ENCODE measurements at regions of chr2 and their contacts with region 1.

Region 1: DNA sequence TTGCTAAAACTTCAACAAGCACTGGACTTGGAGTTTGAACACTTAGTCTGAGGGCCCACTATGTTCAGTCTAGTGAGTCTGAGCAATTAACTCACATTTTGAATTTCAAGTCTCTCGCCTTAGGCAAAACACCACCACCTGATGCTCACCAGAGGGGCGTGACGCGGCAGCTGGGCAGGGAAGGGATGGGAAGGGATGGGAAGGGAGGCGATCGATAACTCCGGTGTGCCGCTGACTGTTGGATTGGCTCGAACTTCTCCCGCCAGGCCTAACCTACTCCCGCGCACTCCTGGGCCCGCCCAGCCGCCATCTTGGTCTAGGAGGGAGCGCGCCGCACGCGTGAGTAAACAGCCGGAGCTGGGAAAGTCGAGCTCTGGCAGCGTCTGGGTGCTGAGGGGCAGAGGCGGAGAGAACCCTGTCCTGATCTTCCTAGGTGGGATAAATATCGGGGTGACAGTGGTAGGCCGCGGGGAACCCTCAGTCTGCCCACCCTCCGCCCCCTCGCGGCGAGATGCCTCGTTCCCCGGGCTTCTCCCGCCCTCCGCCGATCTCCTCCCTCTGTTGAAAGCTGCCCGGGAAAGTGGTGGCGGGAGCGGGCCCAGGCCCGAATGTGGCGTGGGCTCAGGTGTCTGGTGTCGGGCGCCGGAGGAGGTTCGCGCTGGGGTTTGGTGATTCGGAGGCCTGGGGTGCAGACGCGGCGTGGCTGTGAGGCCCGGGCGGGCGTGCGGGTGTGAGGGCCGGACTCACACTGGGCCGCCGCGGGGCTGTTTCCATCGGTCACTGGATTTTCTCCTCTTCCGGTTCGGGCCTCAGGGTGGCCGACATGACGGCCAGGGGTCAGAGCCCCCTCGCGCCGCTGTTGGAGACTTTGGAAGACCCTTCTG is at the start of gene RIF1:
- DNase-seq: peak; percentile 56 to 86 (median 70)
- ATAC-seq: peak; percentile 88
- H3K4me3 ChIP-seq: peak within 1 kb of the TSS; percentile 96
- H3K4me3 Mint-ChIP-seq: peak within 1 kb of the TSS; percentile 95
- H3K27ac ChIP-seq: peak within 1 kb of the TSS; percentile 90 to 91
- H3K27ac Mint-ChIP-seq: peak within 1 kb of the TSS; percentile 93
- H3K4me1 ChIP-seq: peaks cover 11% of the 10 kb centered on the region
- H3K4me1 Mint-ChIP-seq: peaks cover 40% of the 10 kb centered on the region
- H3K27me3 ChIP-seq: no peaks in the 10 kb centered on the region
- H3K27me3 Mint-ChIP-seq: no peaks in the 10 kb centered on the region
- CTCF ChIP-seq: peak; percentile 53
- total RNA-seq, gene RIF1: 66.9 to 69.8 TPM

Region 2: GRCh38 chr2:149587220-149587949 is 1822.5 kb before region 1 on chr2 and contains the start of gene MMADHC:
- CTCF ChIA-PET with region 1: no interaction called
- POLR2A ChIA-PET with region 1: interaction called, 14 read pairs
- intact Hi-C with region 1: loop called in 1 of 2 experiments (anchors 5 kb)
- DNase-seq: peak; percentile 86 to 97 (median 92)
- ATAC-seq: peak; percentile 94
- H3K4me3 ChIP-seq: peak within 1 kb of the TSS; percentile 84
- H3K4me3 Mint-ChIP-seq: peak within 1 kb of the TSS; percentile 96
- H3K27ac ChIP-seq: peak within 1 kb of the TSS; percentile 89 to 93
- H3K27ac Mint-ChIP-seq: peak within 1 kb of the TSS; percentile 98
- H3K4me1 ChIP-seq: peaks cover 14% of the 10 kb centered on the region
- H3K4me1 Mint-ChIP-seq: peaks cover 51% of the 10 kb centered on the region
- H3K27me3 ChIP-seq: peaks cover 0 to 16% of the 10 kb centered on the region in 2 experiments
- H3K27me3 Mint-ChIP-seq: peaks cover 23% of the 10 kb centered on the region
- CTCF ChIP-seq: no peak
- total RNA-seq, gene MMADHC: 77.3 to 77.8 TPM

Region 3: DNA sequence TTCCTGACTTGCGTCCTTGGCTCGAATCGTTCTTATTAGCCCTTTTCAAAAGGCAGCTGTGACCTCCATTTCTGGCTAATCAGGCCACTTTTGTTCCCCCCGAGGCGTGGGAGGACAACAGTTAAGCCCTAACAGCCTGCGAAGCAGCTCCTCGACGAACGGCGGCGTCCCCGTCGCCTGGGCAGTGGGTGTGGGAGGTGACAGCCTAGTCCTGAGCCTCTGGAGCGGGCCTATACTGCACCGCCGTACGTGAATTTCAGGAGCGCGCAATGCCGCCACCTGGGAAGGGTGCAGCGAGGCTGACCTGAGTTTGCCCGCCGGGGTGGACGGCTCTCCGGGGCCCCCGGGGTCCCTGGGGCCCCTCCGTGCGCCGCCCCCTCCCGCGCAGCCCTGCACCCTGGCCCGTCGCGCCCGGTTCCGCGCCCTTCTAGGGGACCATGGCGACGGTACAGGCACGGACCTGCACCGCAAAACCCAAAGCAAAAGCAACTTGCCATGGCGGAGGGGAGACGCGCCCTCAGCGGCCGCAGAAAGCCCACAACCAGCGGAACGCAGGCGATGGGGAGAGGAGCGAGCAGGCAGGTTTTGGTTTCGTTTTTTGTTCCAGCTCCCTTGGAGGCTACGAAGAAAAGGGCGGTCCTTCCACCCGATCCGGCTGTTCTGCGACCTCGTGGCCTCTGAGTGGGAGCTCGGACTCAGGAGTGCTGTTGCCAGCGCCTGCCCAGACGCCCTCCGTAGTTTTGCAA is 148.4 kb before region 1 on chr2 and contains the start of gene RBM43:
- CTCF ChIA-PET with region 1: no interaction called
- POLR2A ChIA-PET with region 1: interaction called, 25 read pairs
- intact Hi-C with region 1: loop called in 1 of 2 experiments (anchors 5 kb)
- DNase-seq: peak; percentile 64 to 94 (median 78)
- ATAC-seq: peak; percentile 88
- H3K4me3 ChIP-seq: peak within 1 kb of the TSS; percentile 96
- H3K4me3 Mint-ChIP-seq: peak within 1 kb of the TSS; percentile 97
- H3K27ac ChIP-seq: peak within 1 kb of the TSS; percentile 96 to 98
- H3K27ac Mint-ChIP-seq: peak within 1 kb of the TSS; percentile 96
- H3K4me1 ChIP-seq: peaks cover 22% of the 10 kb centered on the region
- H3K4me1 Mint-ChIP-seq: peaks cover 39% of the 10 kb centered on the region
- H3K27me3 ChIP-seq: no peaks in the 10 kb centered on the region
- H3K27me3 Mint-ChIP-seq: no peaks in the 10 kb centered on the region
- CTCF ChIP-seq: no peak
- total RNA-seq, gene RBM43: 15.0 to 16.0 TPM

Region 4: DNA sequence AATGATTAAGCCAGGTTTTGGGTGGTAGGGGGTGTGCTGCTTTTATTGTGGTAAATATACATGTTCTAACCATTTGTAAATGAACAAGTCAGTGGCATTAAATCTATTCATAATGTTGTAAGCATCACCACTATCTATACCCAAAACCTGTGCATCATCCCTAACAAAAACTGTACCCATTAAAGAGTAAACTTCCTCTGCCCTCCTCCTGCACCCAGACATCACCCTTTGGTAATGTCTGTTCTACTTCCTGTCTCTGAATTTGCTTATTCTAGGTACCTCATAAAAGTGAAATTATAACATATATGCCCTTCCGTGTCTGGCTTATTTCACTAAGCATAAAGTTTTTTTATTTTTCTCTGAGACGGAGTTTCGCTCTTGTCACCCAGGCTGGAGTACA is 13.9 kb after region 1 on chr2:
- CTCF ChIA-PET with region 1: interaction called, 6 read pairs
- POLR2A ChIA-PET with region 1: interaction called, 6 read pairs
- intact Hi-C with region 1: loop called in 1 of 2 experiments (anchors 2 kb)
- DNase-seq: peak in 10 of 14 experiments; percentile 5 to 80 (median 25)
- ATAC-seq: peak; percentile 97
- H3K4me3 ChIP-seq: no peak overlapping the region
- H3K4me3 Mint-ChIP-seq: peak overlapping the region; percentile 2
- H3K27ac ChIP-seq: peak overlapping the region; percentile 56 to 87
- H3K27ac Mint-ChIP-seq: peak overlapping the region; percentile 88
- H3K4me1 ChIP-seq: peaks cover 21% of the 10 kb centered on the region
- H3K4me1 Mint-ChIP-seq: peaks cover 47% of the 10 kb centered on the region
- H3K27me3 ChIP-seq: no peaks in the 10 kb centered on the region
- H3K27me3 Mint-ChIP-seq: no peaks in the 10 kb centered on the region
- CTCF ChIP-seq: no peak

Region 5: DNA sequence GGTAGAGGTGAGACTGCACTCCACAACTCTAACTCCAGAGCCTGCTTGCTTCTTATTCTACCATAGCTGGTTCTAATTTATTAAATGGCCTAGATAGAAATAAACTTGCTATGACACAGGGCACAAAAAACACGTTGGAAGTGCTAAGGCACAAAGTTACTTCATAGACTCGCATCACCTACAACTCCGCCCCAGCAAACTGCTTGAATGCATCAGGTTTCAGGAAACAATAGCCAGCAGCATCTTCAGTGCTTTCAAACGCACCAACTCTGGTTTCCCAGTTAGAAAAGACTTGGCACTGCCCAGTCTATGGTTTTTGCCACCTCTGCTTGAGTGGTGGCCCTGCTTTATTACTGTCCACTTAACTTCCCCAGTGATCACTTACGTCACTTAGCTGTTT is 142.4 kb after region 1 on chr2:
- CTCF ChIA-PET with region 1: no interaction called
- POLR2A ChIA-PET with region 1: no interaction called
- intact Hi-C with region 1: no loop called
- DNase-seq: no peak
- ATAC-seq: no peak
- H3K4me3 ChIP-seq: no peak overlapping the region
- H3K4me3 Mint-ChIP-seq: no peak overlapping the region
- H3K27ac ChIP-seq: no peak overlapping the region
- H3K27ac Mint-ChIP-seq: no peak overlapping the region
- H3K4me1 ChIP-seq: no peaks in the 10 kb centered on the region
- H3K4me1 Mint-ChIP-seq: no peaks in the 10 kb centered on the region
- H3K27me3 ChIP-seq: no peaks in the 10 kb centered on the region
- H3K27me3 Mint-ChIP-seq: no peaks in the 10 kb centered on the region
- CTCF ChIP-seq: no peak

Region 6: DNA sequence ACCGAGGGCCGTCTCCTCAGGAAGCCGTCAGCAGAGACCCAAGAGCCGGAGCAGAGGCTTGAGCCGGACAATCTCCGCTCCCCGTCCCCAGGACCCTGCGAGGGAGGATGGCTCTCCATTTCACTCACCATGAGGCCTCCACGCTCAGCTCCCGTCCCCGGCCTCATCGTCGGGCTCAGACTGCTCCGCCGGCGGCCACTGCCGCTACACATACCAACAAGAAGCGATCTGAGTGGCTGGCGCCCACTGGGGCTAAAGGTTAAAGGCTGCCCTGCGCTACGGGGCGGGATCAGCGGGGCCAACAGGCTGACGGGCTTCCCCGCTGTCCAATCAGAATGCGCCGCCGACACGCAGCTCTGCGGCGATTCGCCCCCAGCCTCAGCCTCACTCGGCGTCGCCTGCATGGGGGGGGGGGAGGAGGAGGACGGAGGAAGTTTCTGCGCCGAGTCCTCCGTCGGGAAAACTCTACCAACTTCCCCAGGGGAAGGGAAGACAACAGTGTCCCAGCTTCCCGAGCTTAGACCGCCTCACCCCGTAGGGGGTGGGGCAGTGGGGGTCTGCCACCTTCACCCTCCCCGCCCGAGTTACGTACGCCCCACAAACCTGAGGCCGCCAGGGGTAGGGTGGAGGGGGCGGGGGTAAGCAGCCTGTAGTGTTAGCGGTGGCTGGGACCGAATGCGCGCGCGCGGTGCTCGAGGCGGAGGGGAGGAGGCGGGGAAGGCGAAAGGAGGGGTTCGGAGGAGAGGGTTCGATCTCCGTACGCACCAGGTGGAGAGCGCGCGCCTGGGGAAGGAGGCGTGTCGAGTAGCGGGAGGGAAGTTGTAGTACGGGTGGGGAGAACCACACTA is 1307.6 kb after region 1 on chr2 and contains the start of gene PRPF40A:
- CTCF ChIA-PET with region 1: no interaction called
- POLR2A ChIA-PET with region 1: no interaction called
- intact Hi-C with region 1: loop called in 1 of 2 experiments (anchors 5 kb)
- DNase-seq: peak; percentile 97 to 100 (median 99)
- ATAC-seq: peak; percentile 76
- H3K4me3 ChIP-seq: peak within 1 kb of the TSS; percentile 88
- H3K4me3 Mint-ChIP-seq: peak within 1 kb of the TSS; percentile 99
- H3K27ac ChIP-seq: peak within 1 kb of the TSS; percentile 95 to 97
- H3K27ac Mint-ChIP-seq: peak within 1 kb of the TSS; percentile 97
- H3K4me1 ChIP-seq: peaks cover 8% of the 10 kb centered on the region
- H3K4me1 Mint-ChIP-seq: peaks cover 77% of the 10 kb centered on the region
- H3K27me3 ChIP-seq: no peaks in the 10 kb centered on the region
- H3K27me3 Mint-ChIP-seq: no peaks in the 10 kb centered on the region
- CTCF ChIP-seq: no peak
- total RNA-seq, gene PRPF40A: 146 to 148 TPM

Measured in CD4-positive, alpha-beta T cell (primary cell).